Right cardiac atrium (tissue), 5 donors: ENCODE measurements at regions of chr5 and their contacts with region 1.

Region 1: GRCh38 chr5:10452768-10453331 is 11.2 kb downstream of the ROPN1L start:
- DNase-seq: no peak
- ATAC-seq: peak; percentile 79 to 84
- H3K4me3 ChIP-seq: no peak overlapping the region
- H3K27ac ChIP-seq: no peak overlapping the region
- H3K4me1 ChIP-seq: no peaks in the 10 kb centered on the region
- H3K27me3 ChIP-seq: no peaks in the 10 kb centered on the region

Region 2: DNA sequence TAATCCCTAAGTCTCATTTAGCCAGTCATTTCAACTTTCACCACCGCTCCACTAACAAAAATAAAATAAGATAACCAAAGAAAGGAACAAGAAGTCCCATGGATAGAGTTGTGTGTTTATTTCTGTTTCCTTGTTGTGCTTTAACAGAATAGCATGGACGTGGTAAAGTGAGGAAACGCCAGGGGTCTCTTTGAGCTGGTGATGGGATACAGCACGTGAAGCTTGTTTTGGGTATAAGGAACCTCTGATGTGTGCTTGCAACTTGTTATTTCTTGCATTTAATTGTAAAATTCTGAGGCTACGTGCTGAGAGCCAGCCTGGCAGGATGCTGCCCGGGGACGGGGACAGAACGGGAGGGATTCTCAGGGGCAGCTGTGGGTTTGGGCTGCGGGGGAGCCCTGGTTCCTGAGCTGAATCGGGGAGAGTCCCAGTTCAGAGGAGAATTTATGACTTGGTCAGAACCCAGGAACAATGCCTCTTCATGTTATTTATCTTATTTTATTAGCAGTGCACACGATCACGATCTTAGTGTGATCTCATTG is 174.4 kb after region 1 on chr5:
- intact Hi-C with region 1: loop called (anchors 2 to 5 kb)
- DNase-seq: no peak
- ATAC-seq: peak; percentile 2 to 22
- H3K4me3 ChIP-seq: peak overlapping the region; percentile 1
- H3K27ac ChIP-seq: peak overlapping the region; percentile 39
- H3K4me1 ChIP-seq: peaks cover 2% of the 10 kb centered on the region
- H3K27me3 ChIP-seq: no peaks in the 10 kb centered on the region

Region 3: DNA sequence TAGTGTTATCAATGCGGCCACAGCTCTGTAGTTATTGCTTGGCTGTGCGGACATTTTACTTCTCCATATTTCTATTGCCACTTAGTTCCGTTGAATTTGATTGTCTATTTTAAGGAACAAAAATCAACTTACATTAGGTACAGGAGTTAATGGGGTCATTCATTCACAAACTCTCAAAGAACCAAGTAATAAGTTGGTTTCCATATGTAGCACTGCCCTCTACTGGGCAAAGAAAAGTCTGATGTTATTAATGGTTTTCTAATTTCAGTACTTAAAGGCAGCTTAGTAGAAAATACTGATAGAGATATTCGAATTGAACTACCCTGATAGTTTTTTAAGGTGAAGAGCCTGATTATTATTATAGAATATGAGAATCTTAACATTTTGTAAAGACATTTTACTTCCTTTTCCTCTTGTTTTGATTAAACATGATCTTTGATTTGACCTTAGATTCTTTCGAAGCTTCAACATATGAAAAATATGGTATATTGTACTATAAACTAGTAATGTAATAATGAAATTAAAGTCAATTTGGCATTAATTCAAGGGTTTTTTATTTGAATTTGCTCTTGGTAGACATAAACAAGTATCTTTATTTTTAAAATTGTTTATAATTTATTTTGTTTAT is 1570.9 kb after region 1 on chr5:
- intact Hi-C with region 1: loop called in 1 of 4 experiments (anchors 10 kb)
- DNase-seq: no peak
- ATAC-seq: no peak
- H3K4me3 ChIP-seq: no peak overlapping the region
- H3K27ac ChIP-seq: no peak overlapping the region
- H3K4me1 ChIP-seq: no peaks in the 10 kb centered on the region
- H3K27me3 ChIP-seq: no peaks in the 10 kb centered on the region